GM12878 (cell line): ENCODE measurements at regions of chr6 and their contacts with region 1.

Region 1: DNA sequence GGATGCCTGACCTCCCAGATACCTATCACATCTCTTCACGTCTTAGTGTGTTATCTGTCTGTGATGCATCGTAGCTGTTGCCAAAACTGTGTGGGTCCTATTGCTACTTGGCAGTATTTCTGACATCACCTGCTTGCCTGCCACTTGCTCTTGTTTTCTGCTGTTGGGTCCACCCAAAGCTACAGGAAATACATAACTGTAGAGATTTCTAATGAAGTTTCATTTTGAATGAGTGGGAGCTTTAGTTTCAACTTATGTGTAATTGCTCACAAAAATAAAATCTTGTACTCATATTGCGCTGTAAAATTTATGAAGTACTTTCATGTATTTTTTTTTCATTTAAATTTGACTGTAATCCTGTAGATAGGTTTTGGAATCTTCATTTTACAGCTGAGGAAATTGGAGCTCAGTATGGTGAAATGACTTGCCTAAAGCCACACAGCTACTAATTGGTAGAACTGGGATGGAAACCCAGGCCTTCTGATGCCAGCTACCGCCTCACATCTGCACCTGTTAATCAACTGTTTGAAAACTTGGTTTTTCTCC is 113.6 kb upstream of the MAN1A1 start:
- DNase-seq: peak; percentile 75
- ATAC-seq: peak; percentile 89
- H3K4me3 ChIP-seq: 0 out of 2 replicates have a peak overlapping the region, but pooled peaks have one; percentile 11
- H3K27ac ChIP-seq: peak overlapping the region; percentile 77
- H3K4me1 ChIP-seq: peaks cover 44% of the 10 kb centered on the region
- H3K27me3 ChIP-seq: no peaks in the 10 kb centered on the region
- CTCF ChIP-seq: no peak
- EP300 ChIP-seq: peak; percentile 64 to 81
- POLR2A ChIP-seq: no peak
- RAD21 ChIP-seq: no peak; the same call in 1 of the 2 replicates

Region 2: DNA sequence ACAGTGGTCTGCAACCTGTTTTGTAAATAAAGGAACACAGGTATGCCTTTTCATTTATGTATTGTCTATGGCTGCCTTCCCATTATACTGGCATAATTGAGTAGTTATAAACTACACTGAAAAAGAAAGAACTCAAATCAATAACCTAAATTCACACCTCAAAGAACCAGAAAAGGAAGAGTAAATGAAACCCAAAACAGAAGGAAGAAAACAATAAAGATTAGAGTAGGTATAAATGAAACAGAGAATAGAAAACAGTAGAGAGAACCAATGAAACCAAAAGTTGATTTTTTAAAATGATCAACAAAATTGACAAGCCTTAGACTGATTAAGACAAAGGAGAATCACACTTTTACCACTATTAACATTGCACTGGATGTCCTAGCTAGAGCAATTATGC is 419.4 kb before region 1 on chr6:
- CTCF ChIA-PET with region 1: no interaction called
- POLR2A ChIA-PET with region 1: no interaction called
- RAD21 ChIA-PET with region 1: no interaction called
- SMC1A ChIA-PET with region 1: no interaction called
- in situ Hi-C with region 1: no loop called
- intact Hi-C with region 1: no loop called
- DNase-seq: no peak
- ATAC-seq: peak; percentile 45
- H3K4me3 ChIP-seq: no peak overlapping the region
- H3K27ac ChIP-seq: no peak overlapping the region
- H3K4me1 ChIP-seq: peaks cover 5% of the 10 kb centered on the region; the same call in 1 of the 2 replicates
- H3K27me3 ChIP-seq: no peaks in the 10 kb centered on the region
- CTCF ChIP-seq: no peak
- EP300 ChIP-seq: no peak
- POLR2A ChIP-seq: no peak
- RAD21 ChIP-seq: no peak

Region 3: DNA sequence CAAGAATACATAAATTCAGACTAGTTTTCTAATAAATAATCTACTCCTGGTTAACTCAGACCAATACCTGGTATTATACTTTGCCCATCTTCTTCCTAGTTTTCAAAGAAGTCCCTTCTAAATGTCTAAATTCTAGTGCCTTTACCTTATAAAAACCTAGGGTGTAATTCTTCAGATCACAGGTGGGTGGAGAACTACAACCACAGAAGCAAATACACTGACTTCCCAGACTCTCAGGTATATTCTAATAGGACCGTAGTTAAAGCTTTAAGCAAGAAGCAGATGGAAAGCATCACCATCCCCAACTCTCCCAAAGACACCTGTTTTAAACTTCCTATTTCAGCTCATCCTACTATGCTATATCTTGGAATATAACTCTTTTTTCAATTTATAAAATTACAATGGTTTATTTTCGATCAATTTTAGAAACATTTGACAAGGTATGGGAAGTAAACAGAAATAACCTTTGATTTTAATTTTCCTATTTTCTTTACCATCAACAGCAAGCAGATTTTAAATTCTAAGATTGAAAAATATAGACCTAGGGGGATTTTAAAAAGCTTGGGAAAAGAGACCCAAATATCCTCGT is 129.4 kb before region 1 on chr6:
- CTCF ChIA-PET with region 1: interaction called, 4 read pairs
- POLR2A ChIA-PET with region 1: no interaction called
- RAD21 ChIA-PET with region 1: interaction called, 3 read pairs
- SMC1A ChIA-PET with region 1: interaction called, 10 read pairs
- in situ Hi-C with region 1: no loop called
- intact Hi-C with region 1: no loop called
- DNase-seq: no peak
- ATAC-seq: peak; percentile 61
- H3K4me3 ChIP-seq: no peak overlapping the region
- H3K27ac ChIP-seq: no peak overlapping the region
- H3K4me1 ChIP-seq: no peaks in the 10 kb centered on the region
- H3K27me3 ChIP-seq: no peaks in the 10 kb centered on the region
- CTCF ChIP-seq: peak; percentile 45 to 69 (median 57); a peak in 5 of 6 replicates
- EP300 ChIP-seq: no peak
- POLR2A ChIP-seq: no peak
- RAD21 ChIP-seq: peak; percentile 88

Region 4: GRCh38 chr6:119442776-119443184 is 20.4 kb before region 1 on chr6:
- CTCF ChIA-PET with region 1: interaction called, 8 read pairs
- POLR2A ChIA-PET with region 1: no interaction called
- RAD21 ChIA-PET with region 1: interaction called, 8 read pairs
- SMC1A ChIA-PET with region 1: interaction called, 109 read pairs
- in situ Hi-C with region 1: no loop called
- intact Hi-C with region 1: loop called (anchors 1 kb)
- DNase-seq: no peak
- ATAC-seq: peak; percentile 7; the same call in 1 of the 3 replicates
- H3K4me3 ChIP-seq: no peak overlapping the region
- H3K27ac ChIP-seq: peak overlapping the region; percentile 42
- H3K4me1 ChIP-seq: peaks cover 44% of the 10 kb centered on the region
- H3K27me3 ChIP-seq: no peaks in the 10 kb centered on the region
- CTCF ChIP-seq: no peak
- EP300 ChIP-seq: peak in 1 of 2 experiments; percentile 52; a peak in 2 of 4 replicates
- POLR2A ChIP-seq: no peak
- RAD21 ChIP-seq: no peak

Region 5: GRCh38 chr6:119449331-119450156 is 13.6 kb before region 1 on chr6:
- CTCF ChIA-PET with region 1: interaction called, 8 read pairs
- POLR2A ChIA-PET with region 1: interaction called, 4 read pairs
- RAD21 ChIA-PET with region 1: interaction called, 9 read pairs
- SMC1A ChIA-PET with region 1: interaction called, 109 read pairs
- in situ Hi-C with region 1: no loop called
- intact Hi-C with region 1: loop called (anchors 1 kb)
- DNase-seq: no peak
- ATAC-seq: peak; percentile 40
- H3K4me3 ChIP-seq: no peak overlapping the region
- H3K27ac ChIP-seq: peak overlapping the region; percentile 47; the same call in 1 of the 2 replicates
- H3K4me1 ChIP-seq: peaks cover 32% of the 10 kb centered on the region
- H3K27me3 ChIP-seq: no peaks in the 10 kb centered on the region
- CTCF ChIP-seq: no peak
- EP300 ChIP-seq: no peak
- POLR2A ChIP-seq: no peak
- RAD21 ChIP-seq: no peak

Region 6: GRCh38 chr6:119586250-119586882 is 123.2 kb after region 1 on chr6:
- CTCF ChIA-PET with region 1: no interaction called
- POLR2A ChIA-PET with region 1: interaction called, 6 read pairs
- RAD21 ChIA-PET with region 1: interaction called, 6 read pairs
- SMC1A ChIA-PET with region 1: interaction called, 13 read pairs
- in situ Hi-C with region 1: no loop called
- intact Hi-C with region 1: no loop called
- DNase-seq: peak; percentile 19
- ATAC-seq: peak; percentile 91
- H3K4me3 ChIP-seq: no peak overlapping the region
- H3K27ac ChIP-seq: no peak overlapping the region
- H3K4me1 ChIP-seq: peaks cover 13% of the 10 kb centered on the region
- H3K27me3 ChIP-seq: no peaks in the 10 kb centered on the region
- CTCF ChIP-seq: 0 out of 6 replicates have a peak, but pooled peaks of 1 of the 3 experiments have one; percentile 5
- EP300 ChIP-seq: 0 out of 4 replicates have a peak, but pooled peaks of 1 of the 2 experiments have one; percentile 19
- POLR2A ChIP-seq: no peak
- RAD21 ChIP-seq: peak; percentile 46; the same call in 1 of the 2 replicates

Region 7: GRCh38 chr6:119627908-119628669 is 164.9 kb after region 1 on chr6:
- CTCF ChIA-PET with region 1: no interaction called
- POLR2A ChIA-PET with region 1: no interaction called
- RAD21 ChIA-PET with region 1: no interaction called
- SMC1A ChIA-PET with region 1: no interaction called
- in situ Hi-C with region 1: no loop called
- intact Hi-C with region 1: no loop called
- DNase-seq: no peak
- ATAC-seq: no peak
- H3K4me3 ChIP-seq: no peak overlapping the region
- H3K27ac ChIP-seq: no peak overlapping the region
- H3K4me1 ChIP-seq: no peaks in the 10 kb centered on the region
- H3K27me3 ChIP-seq: no peaks in the 10 kb centered on the region; a peak in 1 of 4 replicates
- CTCF ChIP-seq: no peak; a peak in 1 of 6 replicates
- EP300 ChIP-seq: no peak
- POLR2A ChIP-seq: no peak
- RAD21 ChIP-seq: no peak